ENCODE measurements at regions of chr6 and their contacts with region 1.

Region 1: DNA sequence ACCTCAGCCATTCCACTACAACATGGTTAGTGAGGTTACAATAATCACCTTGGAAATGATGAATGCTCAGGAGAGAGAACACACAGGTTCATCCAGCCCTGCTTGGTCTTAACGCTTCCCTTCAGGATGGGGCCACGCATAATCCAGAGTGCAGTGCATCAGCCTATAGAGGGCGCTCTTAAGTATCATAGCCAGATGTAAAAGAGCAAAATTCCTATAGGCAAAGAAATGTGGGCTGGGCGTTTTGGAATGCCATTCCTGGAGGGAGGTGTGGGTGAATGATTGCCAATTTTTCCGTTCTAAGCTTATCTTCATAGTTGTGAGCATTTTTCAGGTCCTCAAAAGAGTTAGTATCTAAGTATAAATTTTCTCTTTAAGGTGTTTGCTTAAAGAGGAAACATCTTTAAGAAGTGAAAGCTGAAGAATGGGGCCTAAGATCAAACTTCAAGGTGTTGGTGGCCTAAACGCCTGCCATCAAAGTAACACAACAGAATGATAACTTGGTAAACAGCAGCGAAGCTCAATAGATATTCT is 1.8 kb downstream of the RIPOR2 start:
- DNase-seq: peak; percentile 60
- H3K4me3 Mint-ChIP-seq: peak overlapping the region; percentile 87
- H3K27ac Mint-ChIP-seq: peak overlapping the region; percentile 97
- H3K4me1 Mint-ChIP-seq: peaks cover 87% of the 10 kb centered on the region
- H3K27me3 Mint-ChIP-seq: no peaks in the 10 kb centered on the region

Region 2: GRCh38 chr6:24131751-24132150 is 802.2 kb before region 1 on chr6:
- CTCF ChIA-PET with region 1: no interaction called
- POLR2A ChIA-PET with region 1: no interaction called
- intact Hi-C with region 1: no loop called
- DNase-seq: no peak
- H3K4me3 Mint-ChIP-seq: no peak overlapping the region
- H3K27ac Mint-ChIP-seq: no peak overlapping the region
- H3K4me1 Mint-ChIP-seq: no peaks in the 10 kb centered on the region
- H3K27me3 Mint-ChIP-seq: peaks cover 4% of the 10 kb centered on the region

Region 3: GRCh38 chr6:24451581-24452388 is 482.1 kb before region 1 on chr6:
- CTCF ChIA-PET with region 1: no interaction called
- POLR2A ChIA-PET with region 1: no interaction called
- intact Hi-C with region 1: no loop called
- DNase-seq: no peak
- H3K4me3 Mint-ChIP-seq: no peak overlapping the region
- H3K27ac Mint-ChIP-seq: no peak overlapping the region
- H3K4me1 Mint-ChIP-seq: no peaks in the 10 kb centered on the region
- H3K27me3 Mint-ChIP-seq: no peaks in the 10 kb centered on the region

Region 4: DNA sequence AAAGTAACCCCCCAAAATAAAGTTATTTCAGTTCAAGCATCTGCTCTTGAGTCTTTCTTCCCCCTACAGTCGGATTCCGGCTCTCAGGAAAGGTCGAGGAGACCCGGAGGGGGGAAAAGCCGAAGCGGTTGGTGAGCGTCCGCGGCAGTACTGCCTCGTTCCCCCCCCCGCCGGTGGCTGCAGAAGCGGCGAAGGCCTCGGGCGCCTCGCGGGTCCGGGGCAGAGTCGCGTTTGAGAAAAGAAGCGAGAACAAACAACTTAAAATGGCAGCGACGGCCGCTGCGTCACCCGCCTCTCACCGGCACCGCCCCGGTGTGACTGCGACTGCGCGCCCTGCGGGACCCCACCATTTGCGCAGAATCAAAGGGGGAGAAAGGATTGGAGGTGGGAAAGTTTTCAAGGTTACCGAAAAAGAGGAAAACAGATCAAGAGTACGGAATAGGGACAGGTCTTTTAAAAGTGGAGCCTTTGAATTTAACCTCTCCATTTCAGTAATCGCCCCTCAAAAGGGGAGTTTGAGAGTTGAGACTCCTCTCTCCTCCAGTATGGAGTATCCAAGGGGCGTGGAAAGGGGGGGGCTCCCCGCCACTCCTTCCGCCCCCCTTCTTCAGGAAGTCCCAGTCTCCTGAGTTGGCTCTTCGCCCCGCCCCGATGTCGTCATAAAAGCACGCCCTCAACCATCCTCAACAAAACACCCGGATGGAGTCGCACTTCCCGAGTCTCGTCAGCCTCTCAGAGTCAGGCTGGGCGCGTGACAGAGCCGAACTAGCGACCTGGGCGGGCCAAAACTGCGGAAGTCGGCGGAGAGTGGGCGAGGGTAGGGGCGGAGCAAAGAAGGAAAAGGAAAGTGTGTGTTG is 213.1 kb before region 1 on chr6:
- CTCF ChIA-PET with region 1: no interaction called
- POLR2A ChIA-PET with region 1: no interaction called
- intact Hi-C with region 1: loop called (anchors 5 kb)
- DNase-seq: peak; percentile 100
- H3K4me3 Mint-ChIP-seq: peak overlapping the region; percentile 100
- H3K27ac Mint-ChIP-seq: peak overlapping the region; percentile 99
- H3K4me1 Mint-ChIP-seq: peaks cover 32% of the 10 kb centered on the region
- H3K27me3 Mint-ChIP-seq: peaks cover 1% of the 10 kb centered on the region

Region 5: DNA sequence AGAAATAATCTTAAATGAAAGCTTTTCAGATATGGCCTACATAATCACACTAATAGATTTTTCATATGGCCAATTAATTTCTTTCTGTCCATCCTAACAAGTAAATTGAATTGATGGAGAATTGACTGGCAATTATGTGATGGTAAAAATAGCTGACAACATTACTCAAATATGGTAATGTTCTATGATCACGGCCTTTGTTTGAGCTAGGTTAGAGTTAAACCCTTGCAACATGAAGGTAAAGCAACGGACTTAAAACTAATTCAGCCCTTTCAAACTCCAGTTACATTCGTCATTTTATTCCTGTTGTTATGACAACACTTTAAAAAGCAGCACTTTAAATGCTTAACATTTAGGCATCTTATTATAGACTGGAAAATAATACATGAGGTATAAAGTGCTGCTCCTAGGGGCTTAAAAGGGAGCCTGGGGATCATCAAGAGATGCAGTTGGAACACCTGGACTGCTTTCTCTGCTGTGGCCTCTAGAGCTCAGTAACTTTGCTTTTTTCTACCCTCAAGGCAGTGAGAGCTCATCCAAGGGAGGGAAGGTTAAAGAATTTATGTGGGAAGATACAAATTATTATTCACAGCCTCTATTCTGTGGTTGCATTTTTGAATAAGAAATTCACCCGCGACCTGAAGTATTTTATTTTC is 45.1 kb before region 1 on chr6:
- CTCF ChIA-PET with region 1: interaction called, 53 read pairs
- POLR2A ChIA-PET with region 1: no interaction called
- intact Hi-C with region 1: no loop called
- DNase-seq: no peak
- H3K4me3 Mint-ChIP-seq: no peak overlapping the region
- H3K27ac Mint-ChIP-seq: peak overlapping the region; percentile 77
- H3K4me1 Mint-ChIP-seq: peaks cover 84% of the 10 kb centered on the region
- H3K27me3 Mint-ChIP-seq: no peaks in the 10 kb centered on the region

Region 6: DNA sequence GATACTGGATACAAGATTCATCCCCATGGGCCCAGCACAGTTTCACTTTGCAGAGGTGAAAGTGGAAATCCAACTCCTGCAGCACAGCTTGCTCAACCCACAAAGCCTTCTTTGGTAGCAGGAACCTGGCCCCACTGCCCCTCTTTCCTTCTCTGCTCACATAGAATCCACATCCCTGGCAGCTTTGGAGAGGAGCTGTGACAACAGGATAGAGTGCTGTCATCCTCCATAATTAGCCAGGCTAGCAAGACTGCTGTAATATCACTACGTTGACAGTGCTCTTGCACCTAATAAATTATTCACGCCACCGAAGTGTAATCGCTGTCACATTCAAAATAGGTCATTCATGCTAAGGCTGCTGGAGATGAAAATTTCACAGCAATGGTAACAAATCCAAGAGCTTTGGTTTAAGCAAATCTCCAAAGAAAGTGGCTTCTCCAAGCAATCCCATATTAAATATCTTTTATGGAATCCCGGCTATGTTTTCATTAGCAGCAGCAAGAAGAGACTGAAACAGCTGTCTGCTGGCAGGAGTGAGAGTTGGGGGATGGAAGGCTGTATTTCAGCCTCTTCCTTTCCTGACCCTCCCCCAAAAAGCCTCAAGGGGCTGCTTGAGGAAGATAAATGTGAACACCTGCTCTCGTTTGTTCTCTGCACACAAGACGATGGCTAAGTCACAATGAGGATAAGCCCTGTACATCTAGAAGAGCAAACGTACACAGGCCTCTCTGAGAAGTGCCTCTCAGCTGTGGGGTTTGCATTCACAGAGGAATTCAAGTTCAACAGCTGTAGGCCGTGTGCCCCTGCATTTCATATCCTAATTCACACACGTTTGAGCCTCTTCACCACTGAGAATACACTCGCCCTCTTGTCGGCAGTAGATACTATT is 14.7 kb before region 1 on chr6:
- CTCF ChIA-PET with region 1: interaction called, 109 read pairs
- POLR2A ChIA-PET with region 1: interaction called, 10 read pairs
- intact Hi-C with region 1: loop called (anchors 1 kb)
- DNase-seq: peak; percentile 51
- H3K4me3 Mint-ChIP-seq: peak overlapping the region; percentile 56
- H3K27ac Mint-ChIP-seq: peak overlapping the region; percentile 85
- H3K4me1 Mint-ChIP-seq: peaks cover 88% of the 10 kb centered on the region
- H3K27me3 Mint-ChIP-seq: no peaks in the 10 kb centered on the region

Region 7: GRCh38 chr6:24980507-24981387 is 46.8 kb after region 1 on chr6:
- CTCF ChIA-PET with region 1: interaction called, 19 read pairs
- POLR2A ChIA-PET with region 1: no interaction called
- intact Hi-C with region 1: no loop called
- DNase-seq: no peak
- H3K4me3 Mint-ChIP-seq: no peak overlapping the region
- H3K27ac Mint-ChIP-seq: no peak overlapping the region
- H3K4me1 Mint-ChIP-seq: peaks cover 60% of the 10 kb centered on the region
- H3K27me3 Mint-ChIP-seq: no peaks in the 10 kb centered on the region

Region 8: GRCh38 chr6:25027221-25027916 is 93.4 kb after region 1 on chr6:
- CTCF ChIA-PET with region 1: interaction called, 27 read pairs
- POLR2A ChIA-PET with region 1: no interaction called
- intact Hi-C with region 1: loop called (anchors 1 kb)
- DNase-seq: peak; percentile 92
- H3K4me3 Mint-ChIP-seq: peak overlapping the region; percentile 70
- H3K27ac Mint-ChIP-seq: peak overlapping the region; percentile 96
- H3K4me1 Mint-ChIP-seq: peaks cover 75% of the 10 kb centered on the region
- H3K27me3 Mint-ChIP-seq: no peaks in the 10 kb centered on the region

Measured in activated CD4-positive, alpha-beta memory T cell treated with anti-CD3 and anti-CD28 coated beads for 36 hours (primary cell).